ENCODE measurements at regions of chr5 and their contacts with region 1.

Region 1: DNA sequence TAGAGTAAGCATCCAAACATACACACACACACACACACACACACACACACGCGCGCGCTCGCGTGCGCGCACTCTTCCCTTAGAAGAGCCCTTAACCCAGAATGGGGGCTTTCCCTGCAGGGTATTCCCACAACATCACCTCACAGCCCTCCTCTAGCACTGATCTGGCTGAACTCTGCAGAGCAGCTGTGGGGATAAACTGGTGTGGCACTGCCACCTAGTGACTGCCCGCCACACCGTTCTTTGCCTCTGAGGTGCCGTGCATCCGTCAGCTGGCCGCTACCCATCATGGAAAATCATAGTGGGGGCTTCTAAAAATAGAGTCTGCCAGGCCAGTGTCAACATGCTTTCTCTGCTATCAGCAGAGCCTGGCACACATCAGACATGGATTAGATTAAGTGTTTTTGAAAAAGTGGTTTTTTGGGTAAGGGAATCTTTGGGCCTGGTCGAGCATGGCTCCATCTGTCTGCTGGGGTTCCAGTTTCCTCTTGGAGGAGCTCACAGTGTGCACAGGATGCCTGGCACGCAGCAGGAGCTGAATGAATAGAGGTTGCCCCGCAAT is 88.1 kb downstream of the KCNN2 start:
- DNase-seq: peak; percentile 74
- H3K27ac ChIP-seq: no peak overlapping the region
- CTCF ChIP-seq: peak; percentile 83

Region 2: GRCh38 chr5:113612060-113612496 is 837.9 kb before region 1 on chr5:
- CTCF ChIA-PET with region 1: interaction called, 10 read pairs
- POLR2A ChIA-PET with region 1: no interaction called
- DNase-seq: peak; percentile 64
- H3K27ac ChIP-seq: no peak overlapping the region
- CTCF ChIP-seq: peak; percentile 76

Region 3: GRCh38 chr5:113678924-113679575 is 770.9 kb before region 1 on chr5:
- CTCF ChIA-PET with region 1: interaction called, 20 read pairs
- POLR2A ChIA-PET with region 1: no interaction called
- DNase-seq: peak; percentile 76
- H3K27ac ChIP-seq: no peak overlapping the region
- CTCF ChIP-seq: peak; percentile 71

Region 4: DNA sequence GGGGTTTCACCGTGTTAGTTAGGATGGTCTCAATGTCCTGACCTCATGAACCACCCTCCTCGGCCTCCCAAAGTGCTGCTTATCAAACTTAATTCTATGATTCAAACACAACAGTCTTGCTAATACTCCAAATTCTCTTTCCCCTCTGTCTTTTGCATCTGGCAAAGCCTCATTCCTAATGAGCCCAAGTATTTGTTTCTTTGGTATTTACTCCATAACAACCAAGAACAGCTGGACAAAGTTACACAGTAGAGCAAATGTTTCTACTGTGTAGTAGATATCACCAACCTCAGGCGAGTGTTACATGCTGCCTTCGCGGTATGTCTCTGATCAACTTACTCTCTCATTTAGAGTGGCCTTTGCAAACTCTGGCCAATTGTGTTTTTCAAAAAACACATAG is 283.9 kb before region 1 on chr5:
- CTCF ChIA-PET with region 1: no interaction called
- POLR2A ChIA-PET with region 1: no interaction called
- DNase-seq: no peak
- H3K27ac ChIP-seq: no peak overlapping the region
- CTCF ChIP-seq: no peak

Region 5: DNA sequence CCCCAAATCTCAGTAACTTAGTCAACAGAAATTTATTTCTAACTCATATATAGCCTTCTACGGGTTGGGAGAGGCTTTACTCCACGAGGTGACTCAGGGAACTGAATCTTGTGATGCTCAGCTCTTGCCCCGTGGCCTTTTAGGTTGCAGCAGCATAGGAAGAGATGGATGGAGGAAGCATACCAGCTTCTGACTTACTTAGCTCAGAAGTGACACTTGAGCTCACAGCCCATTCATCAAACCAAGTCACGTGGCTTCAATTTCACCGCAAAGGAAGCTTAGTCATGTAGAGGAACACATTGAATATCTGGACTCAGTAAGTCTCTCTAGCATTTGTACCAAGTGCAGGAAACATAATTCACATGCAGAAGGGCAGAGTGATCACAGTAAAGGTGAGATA is 212.2 kb before region 1 on chr5:
- CTCF ChIA-PET with region 1: no interaction called
- POLR2A ChIA-PET with region 1: no interaction called
- DNase-seq: no peak
- H3K27ac ChIP-seq: no peak overlapping the region
- CTCF ChIP-seq: no peak

Region 6: DNA sequence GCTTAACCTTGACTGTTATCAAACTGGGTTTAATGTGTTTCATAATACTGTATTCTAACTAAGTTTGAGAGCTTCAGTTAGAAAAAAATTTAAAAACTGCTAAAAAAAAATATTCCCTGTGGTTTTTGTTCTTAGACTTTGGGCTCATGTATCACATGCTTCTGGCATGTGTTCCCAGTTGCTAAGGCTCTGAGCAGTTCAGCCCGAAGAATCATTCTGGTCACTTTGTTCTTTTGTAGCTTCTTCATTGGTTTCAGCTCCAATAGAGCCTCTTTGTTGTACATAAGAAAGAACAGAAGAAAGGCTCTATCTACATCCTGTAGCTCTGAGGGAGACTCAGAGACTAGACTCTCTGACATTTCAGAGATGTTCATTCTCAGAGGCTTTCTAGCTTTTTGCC is 62.5 kb before region 1 on chr5:
- CTCF ChIA-PET with region 1: no interaction called
- POLR2A ChIA-PET with region 1: no interaction called
- DNase-seq: no peak
- H3K27ac ChIP-seq: no peak overlapping the region
- CTCF ChIP-seq: no peak